A549 (cell line): ENCODE measurements at regions of chr19 and their contacts with region 1.

Region 1: GRCh38 chr19:13093407-13094105 is 9.1 kb downstream of the LYL1 start:
- DNase-seq: peak; percentile 76 to 86
- ATAC-seq: peak; percentile 72 to 87
- H3K4me3 ChIP-seq: no peak overlapping the region
- H3K27ac ChIP-seq: peak overlapping the region in 1 of 2 experiments; percentile 79; a peak in 3 of 6 replicates
- H3K4me1 ChIP-seq: peaks cover 57% of the 10 kb centered on the region
- CTCF ChIP-seq: peak; percentile 81
- EP300 ChIP-seq: no peak
- POLR2A ChIP-seq: no peak
- RAD21 ChIP-seq: peak; percentile 89 to 94

Region 2: DNA sequence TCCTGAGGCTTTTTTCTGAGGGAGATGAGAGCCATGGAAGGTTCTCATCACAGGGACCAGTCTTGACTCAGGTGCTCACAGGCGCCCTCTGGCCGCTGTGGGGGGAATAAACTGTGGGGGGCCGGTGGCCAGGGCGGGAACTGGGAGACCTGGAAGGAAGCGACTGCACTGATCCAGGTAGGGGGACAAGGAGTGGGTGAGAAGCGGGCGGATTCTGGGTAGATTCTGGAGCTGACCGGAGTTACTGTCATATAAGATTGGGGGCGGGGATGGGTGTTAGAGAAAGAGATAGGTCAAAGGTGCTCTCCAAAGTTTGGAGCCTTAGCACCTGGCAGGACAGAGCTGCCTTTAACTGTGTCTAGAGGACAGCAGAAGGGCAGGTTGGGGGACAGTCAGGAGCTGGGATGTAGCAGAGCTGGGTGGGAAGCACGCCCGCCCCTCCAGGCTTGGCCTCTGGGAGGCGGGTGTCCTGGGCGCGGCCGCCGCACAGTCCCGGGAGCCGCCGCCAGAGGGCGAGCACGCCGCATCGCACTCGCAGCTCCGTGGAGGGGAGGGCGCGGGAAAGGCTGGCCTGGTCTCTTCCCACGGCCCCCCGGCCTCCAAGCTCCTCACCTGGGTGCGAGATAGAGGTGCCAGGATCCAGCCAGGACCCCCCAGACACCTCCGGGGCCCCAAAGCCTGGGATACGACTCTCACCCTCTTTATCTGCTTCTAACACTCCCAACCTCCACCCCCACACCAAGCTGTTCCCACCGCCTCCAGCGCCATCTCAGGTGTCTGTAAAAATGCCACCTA is 128.3 kb before region 1 on chr19:
- CTCF ChIA-PET with region 1: interaction called, 68 read pairs
- POLR2A ChIA-PET with region 1: no interaction called
- DNase-seq: peak; percentile 53 to 76
- ATAC-seq: peak; percentile 97 to 98
- H3K4me3 ChIP-seq: peak overlapping the region; percentile 53
- H3K27ac ChIP-seq: peak overlapping the region; percentile 91
- H3K4me1 ChIP-seq: peaks cover 11% of the 10 kb centered on the region; the same call in 1 of the 3 replicates
- CTCF ChIP-seq: peak; percentile 67
- EP300 ChIP-seq: no peak
- POLR2A ChIP-seq: no peak
- RAD21 ChIP-seq: peak; percentile 53 to 63

Region 3: GRCh38 chr19:13033819-13034611 is 59.5 kb before region 1 on chr19:
- CTCF ChIA-PET with region 1: interaction called, 17 read pairs
- POLR2A ChIA-PET with region 1: no interaction called
- DNase-seq: peak; percentile 42 to 68
- ATAC-seq: peak; percentile 84 to 94; a peak in 5 of 6 replicates
- H3K4me3 ChIP-seq: no peak overlapping the region
- H3K27ac ChIP-seq: no peak overlapping the region
- H3K4me1 ChIP-seq: peaks cover 17% of the 10 kb centered on the region
- CTCF ChIP-seq: peak; percentile 47
- EP300 ChIP-seq: no peak
- POLR2A ChIP-seq: no peak
- RAD21 ChIP-seq: peak; percentile 32 to 52

Region 4: GRCh38 chr19:13060964-13061927 is 32.3 kb before region 1 on chr19:
- CTCF ChIA-PET with region 1: interaction called, 47 read pairs
- POLR2A ChIA-PET with region 1: interaction called, 9 read pairs
- DNase-seq: peak; percentile 68 to 73
- ATAC-seq: peak; percentile 94 to 97
- H3K4me3 ChIP-seq: peak overlapping the region; percentile 53
- H3K27ac ChIP-seq: peak overlapping the region; percentile 85 to 89
- H3K4me1 ChIP-seq: peaks cover 11% of the 10 kb centered on the region; the same call in 2 of the 3 replicates
- CTCF ChIP-seq: peak; percentile 78
- EP300 ChIP-seq: no peak
- POLR2A ChIP-seq: no peak; the same call in 1 of the 2 replicates
- RAD21 ChIP-seq: peak; percentile 77 to 82

Region 5: DNA sequence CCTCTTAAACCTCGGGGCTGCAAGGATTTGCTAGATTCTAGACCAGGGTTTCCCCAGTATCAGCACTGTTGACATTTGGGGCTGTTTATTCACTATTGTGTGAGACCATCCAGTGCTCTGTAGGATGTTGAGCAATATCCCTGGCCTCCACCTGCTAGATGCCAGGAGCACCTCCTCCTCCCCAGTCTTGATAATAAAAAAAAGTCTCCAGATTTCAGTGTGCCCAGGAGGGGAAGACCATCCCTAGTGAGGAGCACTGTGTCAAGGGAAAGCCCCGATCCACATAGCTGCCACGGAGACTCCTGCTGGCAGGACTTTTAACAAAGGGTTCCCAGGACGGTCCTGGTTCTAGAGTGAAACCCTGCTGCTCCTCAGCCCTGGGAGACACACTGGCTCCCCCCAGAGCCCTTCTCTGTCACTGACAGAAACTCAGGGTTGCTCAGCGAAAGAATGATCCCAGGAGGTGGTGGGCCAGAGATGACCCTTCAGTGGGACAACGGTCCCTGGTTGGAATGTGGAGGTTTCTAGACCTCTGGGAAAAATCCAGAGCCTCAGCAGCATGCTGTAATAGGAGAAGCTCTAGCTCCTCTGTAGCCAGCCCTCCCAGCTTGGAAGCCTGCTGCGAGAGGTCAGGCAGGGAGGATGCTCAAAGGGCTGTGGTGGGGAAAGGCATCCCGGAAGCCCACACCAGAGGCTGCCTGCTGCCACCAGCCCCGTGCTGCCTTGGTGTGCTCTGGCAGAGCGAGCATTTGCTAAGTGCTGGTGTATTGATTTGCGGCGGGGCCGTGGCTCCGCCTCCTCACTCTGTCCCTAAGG is 11.2 kb before region 1 on chr19:
- CTCF ChIA-PET with region 1: interaction called, 55 read pairs
- POLR2A ChIA-PET with region 1: no interaction called
- DNase-seq: peak; percentile 58 to 61
- ATAC-seq: peak; percentile 79 to 91
- H3K4me3 ChIP-seq: no peak overlapping the region
- H3K27ac ChIP-seq: no peak overlapping the region
- H3K4me1 ChIP-seq: peaks cover 17% of the 10 kb centered on the region
- CTCF ChIP-seq: peak; percentile 22; the same call in 1 of the 3 replicates
- EP300 ChIP-seq: no peak
- POLR2A ChIP-seq: no peak
- RAD21 ChIP-seq: peak; percentile 32 to 51; a peak in 3 of 5 replicates

Region 6: DNA sequence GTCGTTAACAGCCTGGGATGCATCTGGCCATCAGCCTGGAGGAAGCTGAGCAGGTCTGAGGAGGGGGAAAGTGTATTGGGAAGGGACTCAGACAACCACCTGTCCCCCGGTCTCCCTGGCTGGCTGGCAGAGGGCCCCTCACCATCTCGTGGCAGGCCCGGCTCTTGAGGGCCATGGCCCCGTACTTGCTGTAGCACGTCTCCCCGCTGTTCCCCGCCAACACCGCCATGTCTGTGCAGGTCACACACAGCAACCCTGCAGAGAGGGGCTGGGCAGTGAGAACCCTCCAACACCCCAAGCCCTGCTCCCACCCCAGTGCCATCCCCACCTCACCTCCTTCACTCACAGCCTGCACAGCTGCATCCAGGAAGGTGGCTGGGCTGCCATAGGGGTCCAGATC is 19.0 kb after region 1 on chr19:
- CTCF ChIA-PET with region 1: interaction called, 16 read pairs
- POLR2A ChIA-PET with region 1: no interaction called
- DNase-seq: no peak
- ATAC-seq: no peak
- H3K4me3 ChIP-seq: no peak overlapping the region
- H3K27ac ChIP-seq: no peak overlapping the region
- H3K4me1 ChIP-seq: peaks cover 9% of the 10 kb centered on the region; the same call in 1 of the 3 replicates
- CTCF ChIP-seq: no peak
- EP300 ChIP-seq: no peak
- POLR2A ChIP-seq: no peak
- RAD21 ChIP-seq: no peak

Region 7: DNA sequence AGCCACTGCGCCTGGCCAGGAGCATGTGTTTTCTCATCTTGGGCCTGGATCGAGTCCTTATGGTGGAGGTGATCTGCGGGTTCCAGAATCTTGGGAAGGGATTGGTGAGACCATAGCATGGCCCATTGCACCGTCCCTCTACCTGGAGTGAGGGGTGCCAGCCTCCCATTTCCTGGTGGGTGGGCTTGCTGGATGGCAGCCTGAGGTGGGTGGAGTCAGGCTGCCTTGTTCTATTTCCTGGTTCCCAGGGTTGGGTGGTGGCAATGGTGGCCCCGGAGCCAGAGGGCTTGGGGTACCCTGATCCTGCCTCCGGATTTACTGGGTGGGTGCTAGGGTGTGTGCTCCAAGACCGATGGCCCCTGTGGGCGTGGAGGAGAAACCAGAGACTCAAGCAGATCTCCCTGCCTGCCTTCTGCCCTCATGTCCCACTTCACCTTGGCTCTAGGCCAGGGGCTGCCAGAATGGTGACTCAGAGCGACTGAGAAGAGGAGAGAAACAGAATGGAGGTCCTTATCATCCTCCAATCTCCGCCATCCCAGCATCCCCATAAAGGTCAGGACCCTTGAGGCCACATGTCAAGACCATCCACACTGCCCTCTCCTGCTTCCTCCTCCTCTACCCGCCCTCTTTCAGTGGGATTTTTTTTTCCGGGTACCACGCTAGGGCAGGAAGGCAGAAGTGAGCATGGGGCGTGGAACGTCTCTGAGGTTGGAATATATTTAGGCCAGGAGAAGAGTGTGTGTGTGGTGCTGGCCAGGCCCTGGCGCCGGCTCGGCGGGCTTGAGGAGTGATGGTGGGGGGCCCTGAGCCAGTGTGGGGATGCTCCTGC is 78.7 kb after region 1 on chr19:
- CTCF ChIA-PET with region 1: no interaction called
- POLR2A ChIA-PET with region 1: no interaction called
- DNase-seq: peak; percentile 60 to 91
- ATAC-seq: peak; percentile 19 to 43; a peak in 4 of 6 replicates
- H3K4me3 ChIP-seq: no peak overlapping the region
- H3K27ac ChIP-seq: peak overlapping the region; percentile 100
- H3K4me1 ChIP-seq: peaks cover 54% of the 10 kb centered on the region
- CTCF ChIP-seq: no peak
- EP300 ChIP-seq: no peak
- POLR2A ChIP-seq: no peak
- RAD21 ChIP-seq: 0 out of 5 replicates have a peak, but pooled peaks of 1 of the 2 experiments have one; percentile 7